CD8-positive, alpha-beta memory T cell (primary cell): ENCODE measurements at regions of chr2 and their contacts with region 1.

Region 1: GRCh38 chr2:62196278-62196901 is 475 bp downstream of the B3GNT2 start:
- DNase-seq: peak; percentile 48 to 78 (median 62)
- H3K4me3 ChIP-seq: peak overlapping the region; percentile 76
- H3K4me3 Mint-ChIP-seq: peak overlapping the region; percentile 87 to 98 (median 94)
- H3K27ac ChIP-seq: peak overlapping the region; percentile 92
- H3K27ac Mint-ChIP-seq: peak overlapping the region in 7 of 8 donors; percentile 75 to 98 (median 88)
- H3K4me1 ChIP-seq: peaks cover 45% of the 10 kb centered on the region
- H3K4me1 Mint-ChIP-seq: peaks cover 37 to 40% (median 40%) of the 10 kb centered on the region in 3 donors
- H3K27me3 ChIP-seq: no peaks in the 10 kb centered on the region
- H3K27me3 Mint-ChIP-seq: no peaks in the 10 kb centered on the region

Region 2: GRCh38 chr2:62334440-62335058 is 138.2 kb after region 1 on chr2:
- CTCF ChIA-PET with region 1: interaction called, 10 read pairs
- POLR2A ChIA-PET with region 1: no interaction called
- DNase-seq: no peak
- H3K4me3 ChIP-seq: no peak overlapping the region
- H3K4me3 Mint-ChIP-seq: peak overlapping the region in 2 of 7 donors; percentile 19 to 30
- H3K27ac ChIP-seq: no peak overlapping the region
- H3K27ac Mint-ChIP-seq: peak overlapping the region; percentile 55 to 98 (median 94)
- H3K4me1 ChIP-seq: peaks cover 4% of the 10 kb centered on the region
- H3K4me1 Mint-ChIP-seq: peaks cover 48 to 54% (median 52%) of the 10 kb centered on the region in 3 donors
- H3K27me3 ChIP-seq: no peaks in the 10 kb centered on the region
- H3K27me3 Mint-ChIP-seq: no peaks in the 10 kb centered on the region